ENCODE measurements at regions of chr3 and their contacts with region 1.

Region 1: DNA sequence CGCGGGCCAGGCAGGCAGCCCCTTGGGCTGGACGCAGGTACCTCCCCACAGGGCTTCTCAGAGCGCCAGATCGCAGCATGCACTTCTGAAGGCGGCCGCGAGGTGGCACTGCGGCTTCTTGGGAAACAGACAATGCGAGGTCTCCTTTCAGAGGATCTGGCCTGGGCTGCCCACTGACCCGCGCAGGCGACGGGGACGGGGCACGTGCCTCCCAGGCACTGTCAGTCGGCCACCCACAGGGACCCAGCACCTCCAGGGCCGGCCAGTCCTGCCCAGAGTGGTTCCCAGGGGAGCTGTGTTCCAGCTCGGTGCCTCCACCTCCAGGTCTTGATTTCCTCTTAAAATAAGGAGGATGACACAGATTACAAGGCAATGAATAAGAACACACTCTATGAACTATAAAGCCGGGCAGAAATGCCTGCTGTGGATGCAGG is 24.4 kb upstream of the TXNRD3 start:
- DNase-seq: peak; percentile 95
- H3K4me3 Mint-ChIP-seq: peak overlapping the region; percentile 25
- H3K27ac Mint-ChIP-seq: no peak overlapping the region
- H3K4me1 Mint-ChIP-seq: peaks cover 10% of the 10 kb centered on the region
- H3K27me3 Mint-ChIP-seq: peaks cover 75% of the 10 kb centered on the region
- CTCF ChIP-seq: peak; percentile 100

Region 2: GRCh38 chr3:126446791-126447190 is 232.5 kb before region 1 on chr3:
- CTCF ChIA-PET with region 1: no interaction called
- intact Hi-C with region 1: no loop called
- DNase-seq: no peak
- H3K4me3 Mint-ChIP-seq: no peak overlapping the region
- H3K27ac Mint-ChIP-seq: no peak overlapping the region
- H3K4me1 Mint-ChIP-seq: peaks cover 10% of the 10 kb centered on the region
- H3K27me3 Mint-ChIP-seq: no peaks in the 10 kb centered on the region
- CTCF ChIP-seq: no peak

Region 3: GRCh38 chr3:126630020-126630419 is 49.3 kb before region 1 on chr3:
- CTCF ChIA-PET with region 1: no interaction called
- intact Hi-C with region 1: no loop called
- DNase-seq: no peak
- H3K4me3 Mint-ChIP-seq: no peak overlapping the region
- H3K27ac Mint-ChIP-seq: no peak overlapping the region
- H3K4me1 Mint-ChIP-seq: no peaks in the 10 kb centered on the region
- H3K27me3 Mint-ChIP-seq: no peaks in the 10 kb centered on the region
- CTCF ChIP-seq: no peak

Region 4: DNA sequence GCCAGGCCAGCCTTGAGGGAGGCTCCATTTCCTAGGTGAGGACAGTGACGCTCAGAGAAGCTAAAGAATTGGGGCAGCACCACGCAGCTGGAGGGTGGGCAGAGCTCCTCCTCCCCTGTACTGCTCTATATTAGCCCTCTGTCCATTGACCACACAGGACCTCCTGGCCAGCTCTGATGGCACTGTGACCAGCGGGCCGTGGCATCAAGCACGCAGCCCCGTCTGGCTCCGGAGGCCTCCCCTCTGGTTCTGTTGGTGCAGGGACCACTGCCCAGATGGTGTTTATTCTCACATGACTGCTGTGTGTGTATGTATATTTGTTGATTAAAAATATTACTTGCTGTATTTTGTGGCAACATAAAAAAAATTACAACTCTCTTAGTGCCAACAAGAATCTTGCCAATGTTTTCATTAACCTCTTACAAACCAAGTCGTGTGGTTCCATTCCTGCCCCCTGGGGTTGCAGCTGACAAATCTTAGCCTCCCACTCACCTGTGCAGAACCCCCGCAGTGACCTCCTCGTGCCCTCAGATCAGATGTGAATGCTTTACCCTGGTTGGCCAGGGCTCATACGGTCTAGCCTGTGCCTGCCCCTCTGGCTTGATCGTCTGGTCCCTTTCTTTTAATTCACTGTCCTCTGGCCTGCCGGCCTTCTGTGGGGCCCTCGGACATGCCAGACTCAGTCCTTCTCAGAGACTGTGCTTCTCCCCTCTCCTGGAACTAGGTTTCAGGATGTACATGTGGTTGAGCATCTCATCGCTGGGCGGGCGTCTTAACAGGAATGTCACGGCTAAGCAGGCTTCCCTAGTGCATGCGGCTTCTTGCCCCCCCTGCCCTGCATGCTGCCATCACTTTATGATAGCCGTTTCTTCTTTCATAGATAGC is 39.5 kb after region 1 on chr3:
- CTCF ChIA-PET with region 1: interaction called, 3 read pairs
- intact Hi-C with region 1: loop called (anchors 1 kb)
- DNase-seq: no peak
- H3K4me3 Mint-ChIP-seq: no peak overlapping the region
- H3K27ac Mint-ChIP-seq: no peak overlapping the region
- H3K4me1 Mint-ChIP-seq: peaks cover 18% of the 10 kb centered on the region
- H3K27me3 Mint-ChIP-seq: no peaks in the 10 kb centered on the region
- CTCF ChIP-seq: no peak

Region 5: DNA sequence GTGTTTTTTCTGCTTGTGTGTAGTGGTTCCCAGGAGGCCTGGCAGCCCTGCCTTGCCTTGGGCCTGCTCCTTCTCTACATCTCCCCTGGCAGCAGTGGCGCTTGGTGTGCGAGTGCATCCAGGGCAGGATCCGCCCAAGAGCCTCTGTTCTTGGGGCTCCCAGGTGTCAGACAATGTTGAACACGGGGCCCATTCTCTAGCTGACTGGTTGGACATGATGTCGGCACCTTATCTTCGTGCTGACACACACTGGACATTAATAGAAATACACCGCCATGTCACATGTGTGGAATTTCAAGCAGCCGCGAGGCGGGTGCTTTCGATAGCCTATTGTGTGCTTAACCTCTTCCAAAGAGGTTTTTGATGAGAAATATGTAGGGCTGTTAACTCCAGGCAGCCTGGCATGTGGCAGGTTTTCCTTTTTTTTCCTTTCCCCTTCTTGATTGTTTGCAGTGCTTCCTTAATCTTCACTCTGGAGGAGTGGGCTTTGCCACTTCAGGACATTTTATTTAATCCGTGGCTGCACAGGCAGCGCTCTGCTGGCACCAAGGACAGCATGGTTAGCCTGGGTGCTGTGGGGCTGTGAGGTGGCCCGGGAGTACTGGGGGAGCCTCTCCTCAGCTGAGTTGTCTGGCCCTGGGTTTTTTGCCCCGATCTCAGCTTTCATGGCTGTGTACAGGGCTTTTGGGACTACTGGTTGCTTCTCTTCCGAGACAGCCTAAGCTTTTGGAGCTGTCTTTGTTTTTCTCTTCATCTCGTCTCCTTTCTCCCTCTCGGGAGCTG is 67.3 kb after region 1 on chr3:
- CTCF ChIA-PET with region 1: interaction called, 6 read pairs
- intact Hi-C with region 1: loop called (anchors 1 kb)
- DNase-seq: peak; percentile 70
- H3K4me3 Mint-ChIP-seq: peak overlapping the region; percentile 12
- H3K27ac Mint-ChIP-seq: peak overlapping the region; percentile 29
- H3K4me1 Mint-ChIP-seq: peaks cover 54% of the 10 kb centered on the region
- H3K27me3 Mint-ChIP-seq: no peaks in the 10 kb centered on the region
- CTCF ChIP-seq: peak; percentile 33

Region 6: GRCh38 chr3:126883241-126883640 is 203.9 kb after region 1 on chr3:
- CTCF ChIA-PET with region 1: no interaction called
- intact Hi-C with region 1: no loop called
- DNase-seq: no peak
- H3K4me3 Mint-ChIP-seq: no peak overlapping the region
- H3K27ac Mint-ChIP-seq: no peak overlapping the region
- H3K4me1 Mint-ChIP-seq: no peaks in the 10 kb centered on the region
- H3K27me3 Mint-ChIP-seq: no peaks in the 10 kb centered on the region
- CTCF ChIP-seq: no peak

Region 7: DNA sequence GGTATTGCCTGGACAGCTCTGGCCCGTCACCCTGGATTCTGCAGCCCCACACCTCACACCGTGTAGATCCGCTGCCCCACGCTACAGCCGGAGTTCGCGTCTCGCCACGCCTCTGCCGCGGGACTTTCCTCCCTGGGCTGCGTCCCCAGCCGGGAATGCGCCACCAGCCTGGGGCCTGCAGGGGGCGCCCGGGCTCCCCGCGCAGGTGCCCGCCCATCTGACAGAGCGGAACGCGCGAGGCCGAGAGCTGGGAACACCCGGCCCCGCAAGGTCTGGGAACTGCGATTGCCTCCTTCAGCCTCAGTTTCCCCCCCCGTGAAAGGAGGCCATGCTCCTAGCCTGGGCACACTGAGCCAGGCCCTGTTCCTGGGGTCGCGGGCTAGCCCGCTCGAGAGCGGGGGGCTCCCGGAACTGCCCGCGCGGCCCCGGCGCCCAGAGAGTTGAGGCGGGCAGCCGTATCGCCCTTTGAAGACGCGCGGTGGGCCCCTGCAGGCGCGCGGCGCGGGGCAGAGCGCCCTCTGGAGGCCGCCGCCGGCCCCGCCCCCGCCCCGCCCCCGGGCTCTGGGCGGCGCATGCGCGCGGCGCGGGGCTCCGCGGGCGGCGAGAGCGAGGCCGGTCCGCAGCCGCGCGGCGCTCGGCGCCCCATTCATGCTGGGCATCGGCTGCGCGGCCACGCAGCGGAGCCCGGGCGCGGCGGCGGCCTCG is 303.3 kb after region 1 on chr3 and contains the start of gene PLXNA1:
- CTCF ChIA-PET with region 1: interaction called, 3 read pairs
- intact Hi-C with region 1: loop called (anchors 5 kb)
- DNase-seq: peak; percentile 91
- H3K4me3 Mint-ChIP-seq: peak within 1 kb of the TSS; percentile 75
- H3K27ac Mint-ChIP-seq: no peak within 1 kb of the TSS
- H3K4me1 Mint-ChIP-seq: peaks cover 25% of the 10 kb centered on the region
- H3K27me3 Mint-ChIP-seq: peaks cover 32% of the 10 kb centered on the region
- CTCF ChIP-seq: peak; percentile 99
- total RNA-seq, gene PLXNA1: 81.1 and 84.3 TPM in 2 replicates

Region 8: GRCh38 chr3:127544192-127544802 is 865.0 kb after region 1 on chr3:
- CTCF ChIA-PET with region 1: interaction called, 3 read pairs
- intact Hi-C with region 1: loop called (anchors 5 kb)
- DNase-seq: peak; percentile 92
- H3K4me3 Mint-ChIP-seq: no peak overlapping the region
- H3K27ac Mint-ChIP-seq: no peak overlapping the region
- H3K4me1 Mint-ChIP-seq: peaks cover 7% of the 10 kb centered on the region
- H3K27me3 Mint-ChIP-seq: peaks cover 59% of the 10 kb centered on the region
- CTCF ChIP-seq: peak; percentile 96